Naive thymus-derived CD4-positive, alpha-beta T cell (primary cell): ENCODE measurements at regions of chr18 and their contacts with region 1.

Region 1: GRCh38 chr18:62425465-62426195 is 97.2 kb upstream of the ZCCHC2 start:
- DNase-seq: peak in 8 of 9 donors; percentile 41 to 67 (median 57)
- ATAC-seq: peak; percentile 82
- H3K4me3 ChIP-seq: no peak overlapping the region
- H3K4me3 Mint-ChIP-seq: peak overlapping the region in 1 of 10 donors; percentile 52
- H3K27ac ChIP-seq: no peak overlapping the region
- H3K27ac Mint-ChIP-seq: peak overlapping the region in 5 of 9 donors; percentile 16 to 64 (median 39)
- H3K4me1 ChIP-seq: peaks cover 0 to 6% of the 10 kb centered on the region in 2 donors
- H3K4me1 Mint-ChIP-seq: peaks cover 11 to 54% (median 18%) of the 10 kb centered on the region in 7 donors
- H3K27me3 ChIP-seq: no peaks in the 10 kb centered on the region
- H3K27me3 Mint-ChIP-seq: peaks cover 0 to 4% (median 2%) of the 10 kb centered on the region in 5 donors

Region 2: DNA sequence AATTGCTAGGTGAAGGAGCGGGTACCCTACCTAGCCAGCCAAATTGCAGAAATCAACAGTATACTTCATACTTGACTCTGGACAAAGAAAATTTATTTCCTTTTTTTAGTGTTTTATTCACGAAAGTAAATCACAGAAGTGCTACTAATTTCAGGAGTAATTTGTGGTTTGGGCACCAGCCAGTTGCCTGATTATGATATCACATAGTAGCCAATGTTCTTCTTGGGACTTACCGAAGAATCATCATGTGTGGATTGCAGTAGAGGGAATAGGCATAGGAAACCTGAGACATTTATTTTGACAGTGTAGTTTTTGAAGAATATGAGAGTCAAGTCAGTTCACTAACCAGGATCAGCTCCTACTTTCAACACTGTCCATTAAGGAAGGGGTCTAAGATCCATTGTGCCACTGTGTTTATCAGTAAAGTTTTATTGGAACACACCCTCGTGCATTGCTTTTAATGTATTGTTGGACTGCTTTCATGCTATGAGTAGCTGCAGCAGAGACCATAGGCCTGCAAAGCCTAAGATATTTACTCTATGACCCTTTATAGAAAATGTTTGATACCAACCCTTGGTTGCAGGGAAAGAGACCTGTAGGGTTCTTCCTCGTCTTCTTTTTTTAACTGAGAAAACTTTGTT is 68.4 kb before region 1 on chr18:
- CTCF ChIA-PET with region 1: no interaction called
- POLR2A ChIA-PET with region 1: no interaction called
- intact Hi-C with region 1: no loop called
- DNase-seq: no peak
- ATAC-seq: no peak
- H3K4me3 ChIP-seq: no peak overlapping the region
- H3K4me3 Mint-ChIP-seq: no peak overlapping the region
- H3K27ac ChIP-seq: no peak overlapping the region
- H3K27ac Mint-ChIP-seq: peak overlapping the region in 1 of 9 donors; percentile 7
- H3K4me1 ChIP-seq: no peaks in the 10 kb centered on the region
- H3K4me1 Mint-ChIP-seq: peaks cover 0 to 9% (median 0%) of the 10 kb centered on the region in 7 donors
- H3K27me3 ChIP-seq: no peaks in the 10 kb centered on the region
- H3K27me3 Mint-ChIP-seq: peaks cover 0 to 3% (median 0%) of the 10 kb centered on the region in 5 donors

Region 3: GRCh38 chr18:62368100-62368499 is 57.5 kb before region 1 on chr18:
- CTCF ChIA-PET with region 1: interaction called, 5 read pairs
- POLR2A ChIA-PET with region 1: no interaction called
- intact Hi-C with region 1: loop called in 1 of 2 experiments (anchors 1 kb)
- DNase-seq: no peak
- ATAC-seq: no peak
- H3K4me3 ChIP-seq: no peak overlapping the region
- H3K4me3 Mint-ChIP-seq: peak overlapping the region in 1 of 10 donors; percentile 36
- H3K27ac ChIP-seq: no peak overlapping the region
- H3K27ac Mint-ChIP-seq: peak overlapping the region in 1 of 9 donors; percentile 83
- H3K4me1 ChIP-seq: no peaks in the 10 kb centered on the region
- H3K4me1 Mint-ChIP-seq: peaks cover 0 to 46% (median 3%) of the 10 kb centered on the region in 7 donors
- H3K27me3 ChIP-seq: no peaks in the 10 kb centered on the region
- H3K27me3 Mint-ChIP-seq: peaks cover 0 to 3% (median 0%) of the 10 kb centered on the region in 5 donors

Region 4: GRCh38 chr18:62407660-62408059 is 18.0 kb before region 1 on chr18:
- CTCF ChIA-PET with region 1: no interaction called
- POLR2A ChIA-PET with region 1: no interaction called
- intact Hi-C with region 1: no loop called
- DNase-seq: no peak
- ATAC-seq: no peak
- H3K4me3 ChIP-seq: no peak overlapping the region
- H3K4me3 Mint-ChIP-seq: peak overlapping the region in 1 of 10 donors; percentile 13
- H3K27ac ChIP-seq: no peak overlapping the region
- H3K27ac Mint-ChIP-seq: peak overlapping the region in 1 of 9 donors; percentile 33
- H3K4me1 ChIP-seq: no peaks in the 10 kb centered on the region
- H3K4me1 Mint-ChIP-seq: peaks cover 0 to 9% (median 0%) of the 10 kb centered on the region in 7 donors
- H3K27me3 ChIP-seq: no peaks in the 10 kb centered on the region
- H3K27me3 Mint-ChIP-seq: peaks cover 0 to 8% (median 0%) of the 10 kb centered on the region in 5 donors

Region 5: GRCh38 chr18:62505669-62506494 is 80.3 kb after region 1 on chr18:
- CTCF ChIA-PET with region 1: no interaction called
- POLR2A ChIA-PET with region 1: interaction called, 13 read pairs
- intact Hi-C with region 1: loop called (anchors 1 kb)
- DNase-seq: peak in 5 of 9 donors; percentile 37 to 49 (median 47)
- ATAC-seq: peak; percentile 58
- H3K4me3 ChIP-seq: peak overlapping the region; percentile 77
- H3K4me3 Mint-ChIP-seq: peak overlapping the region; percentile 82 to 94 (median 88)
- H3K27ac ChIP-seq: peak overlapping the region; percentile 67
- H3K27ac Mint-ChIP-seq: peak overlapping the region; percentile 90 to 100 (median 96)
- H3K4me1 ChIP-seq: peaks cover 5 to 17% of the 10 kb centered on the region in 2 donors
- H3K4me1 Mint-ChIP-seq: peaks cover 4 to 30% (median 21%) of the 10 kb centered on the region in 7 donors
- H3K27me3 ChIP-seq: no peaks in the 10 kb centered on the region
- H3K27me3 Mint-ChIP-seq: no peaks in the 10 kb centered on the region

Region 6: DNA sequence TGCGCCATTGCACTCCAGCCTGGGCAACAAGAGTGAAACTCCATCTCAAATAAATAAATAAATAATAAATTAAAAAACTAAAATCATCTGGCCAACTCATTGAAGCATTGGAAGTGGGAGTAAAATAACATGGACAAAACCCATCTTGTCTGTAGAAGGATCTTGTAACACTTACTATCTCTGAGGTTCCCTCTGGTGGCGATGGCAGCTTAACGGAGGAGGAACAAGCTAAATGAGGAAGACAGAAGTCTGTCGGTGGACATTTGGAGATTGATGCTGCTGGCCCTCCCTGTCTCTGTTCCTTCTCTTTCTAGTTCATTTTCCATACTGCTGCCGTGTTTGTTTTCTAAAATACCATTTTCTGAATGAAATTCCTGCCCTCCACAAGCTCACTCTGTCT is 140.6 kb after region 1 on chr18:
- CTCF ChIA-PET with region 1: interaction called, 3 read pairs
- POLR2A ChIA-PET with region 1: interaction called, 3 read pairs
- intact Hi-C with region 1: loop called (anchors 1 kb)
- DNase-seq: peak in 2 of 9 donors; percentile 3 to 11
- ATAC-seq: peak; percentile 52
- H3K4me3 ChIP-seq: no peak overlapping the region
- H3K4me3 Mint-ChIP-seq: no peak overlapping the region
- H3K27ac ChIP-seq: no peak overlapping the region
- H3K27ac Mint-ChIP-seq: peak overlapping the region in 3 of 9 donors; percentile 13 to 63 (median 51)
- H3K4me1 ChIP-seq: no peaks in the 10 kb centered on the region
- H3K4me1 Mint-ChIP-seq: peaks cover 0 to 8% (median 3%) of the 10 kb centered on the region in 7 donors
- H3K27me3 ChIP-seq: no peaks in the 10 kb centered on the region
- H3K27me3 Mint-ChIP-seq: no peaks in the 10 kb centered on the region

Region 7: GRCh38 chr18:62637807-62638687 is 212.4 kb after region 1 on chr18:
- CTCF ChIA-PET with region 1: interaction called, 3 read pairs
- POLR2A ChIA-PET with region 1: no interaction called
- intact Hi-C with region 1: loop called in 1 of 2 experiments (anchors 1 kb)
- DNase-seq: peak; percentile 7 to 49 (median 27)
- ATAC-seq: peak; percentile 76
- H3K4me3 ChIP-seq: no peak overlapping the region
- H3K4me3 Mint-ChIP-seq: no peak overlapping the region
- H3K27ac ChIP-seq: no peak overlapping the region
- H3K27ac Mint-ChIP-seq: no peak overlapping the region
- H3K4me1 ChIP-seq: no peaks in the 10 kb centered on the region
- H3K4me1 Mint-ChIP-seq: peaks cover 0 to 14% (median 0%) of the 10 kb centered on the region in 7 donors
- H3K27me3 ChIP-seq: no peaks in the 10 kb centered on the region
- H3K27me3 Mint-ChIP-seq: peaks cover 18 to 30% (median 24%) of the 10 kb centered on the region in 5 donors

Region 8: DNA sequence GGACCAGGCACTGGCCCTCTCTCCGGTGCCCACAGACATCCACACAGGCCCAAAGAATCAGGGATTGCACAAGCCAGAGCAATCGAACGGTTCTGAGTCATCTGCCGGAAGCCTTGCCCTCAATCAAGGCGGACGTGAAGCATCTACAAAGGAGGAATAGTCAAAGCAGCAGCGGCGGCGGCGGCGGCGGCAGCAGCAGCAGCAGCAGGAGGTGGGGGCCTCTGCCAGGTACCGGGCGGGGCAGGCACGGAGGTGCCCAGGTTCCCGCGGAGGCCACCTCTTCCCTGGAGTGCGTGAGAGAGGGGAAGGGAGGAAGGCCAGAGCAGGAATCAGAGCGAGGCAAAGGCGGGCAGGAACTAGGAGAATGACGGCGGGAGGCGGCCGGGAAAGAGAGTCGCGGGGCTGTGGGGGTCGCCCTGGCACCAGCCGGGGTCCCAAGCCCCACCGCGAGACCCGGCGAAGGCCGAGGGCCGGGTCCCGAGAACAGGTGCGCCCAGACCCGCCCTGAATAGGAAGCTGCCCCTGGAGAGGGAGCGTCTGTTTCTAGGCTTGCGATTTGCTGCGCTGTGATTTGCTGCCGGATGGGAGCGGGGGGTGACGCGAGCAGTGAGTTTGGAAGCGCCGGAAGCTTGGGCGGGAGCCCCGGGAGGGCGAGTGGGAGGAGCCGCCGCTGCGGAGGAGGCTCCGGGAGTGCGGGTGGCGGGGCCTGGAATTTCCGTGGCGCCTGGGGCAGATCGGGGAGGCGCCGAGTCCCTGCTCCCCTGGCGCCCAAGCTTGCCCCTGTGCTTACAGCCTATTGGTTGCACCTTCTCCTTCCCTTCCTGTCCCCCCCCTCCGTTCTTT is 1544.6 kb after region 1 on chr18 and contains the start of gene SERPINB8:
- CTCF ChIA-PET with region 1: no interaction called
- POLR2A ChIA-PET with region 1: no interaction called
- intact Hi-C with region 1: loop called in 1 of 2 experiments (anchors 2 kb)
- DNase-seq: peak; percentile 44 to 84 (median 77)
- ATAC-seq: peak; percentile 89
- H3K4me3 ChIP-seq: peak within 1 kb of the TSS; percentile 93
- H3K4me3 Mint-ChIP-seq: peak within 1 kb of the TSS; percentile 88 to 98 (median 94)
- H3K27ac ChIP-seq: peak within 1 kb of the TSS; percentile 96
- H3K27ac Mint-ChIP-seq: peak within 1 kb of the TSS; percentile 92 to 97 (median 94)
- H3K4me1 ChIP-seq: peaks cover 13% of the 10 kb centered on the region in 2 donors
- H3K4me1 Mint-ChIP-seq: peaks cover 26 to 42% (median 31%) of the 10 kb centered on the region in 7 donors
- H3K27me3 ChIP-seq: no peaks in the 10 kb centered on the region
- H3K27me3 Mint-ChIP-seq: peaks cover 0 to 25% (median 1%) of the 10 kb centered on the region in 5 donors
- total RNA-seq, gene SERPINB8: 9.2 to 15.7 (median 10.0) TPM